ENCODE measurements at regions of chr1 and their contacts with region 1.

Region 1: GRCh38 chr1:25091658-25092057 is 140.6 kb downstream of the SYF2 start:
- DNase-seq: no peak
- H3K4me3 ChIP-seq: no peak overlapping the region
- H3K27ac ChIP-seq: no peak overlapping the region
- H3K4me1 ChIP-seq: no peaks in the 10 kb centered on the region
- H3K27me3 ChIP-seq: no peaks in the 10 kb centered on the region
- CTCF ChIP-seq: no peak

Region 2: GRCh38 chr1:24866211-24867083 is 225.2 kb before region 1 on chr1:
- CTCF ChIA-PET with region 1: interaction called, 15 read pairs
- POLR2A ChIA-PET with region 1: no interaction called
- intact Hi-C with region 1: no loop called
- DNase-seq: no peak
- H3K4me3 ChIP-seq: no peak overlapping the region
- H3K27ac ChIP-seq: no peak overlapping the region
- H3K4me1 ChIP-seq: no peaks in the 10 kb centered on the region
- H3K27me3 ChIP-seq: no peaks in the 10 kb centered on the region
- CTCF ChIP-seq: no peak

Region 3: DNA sequence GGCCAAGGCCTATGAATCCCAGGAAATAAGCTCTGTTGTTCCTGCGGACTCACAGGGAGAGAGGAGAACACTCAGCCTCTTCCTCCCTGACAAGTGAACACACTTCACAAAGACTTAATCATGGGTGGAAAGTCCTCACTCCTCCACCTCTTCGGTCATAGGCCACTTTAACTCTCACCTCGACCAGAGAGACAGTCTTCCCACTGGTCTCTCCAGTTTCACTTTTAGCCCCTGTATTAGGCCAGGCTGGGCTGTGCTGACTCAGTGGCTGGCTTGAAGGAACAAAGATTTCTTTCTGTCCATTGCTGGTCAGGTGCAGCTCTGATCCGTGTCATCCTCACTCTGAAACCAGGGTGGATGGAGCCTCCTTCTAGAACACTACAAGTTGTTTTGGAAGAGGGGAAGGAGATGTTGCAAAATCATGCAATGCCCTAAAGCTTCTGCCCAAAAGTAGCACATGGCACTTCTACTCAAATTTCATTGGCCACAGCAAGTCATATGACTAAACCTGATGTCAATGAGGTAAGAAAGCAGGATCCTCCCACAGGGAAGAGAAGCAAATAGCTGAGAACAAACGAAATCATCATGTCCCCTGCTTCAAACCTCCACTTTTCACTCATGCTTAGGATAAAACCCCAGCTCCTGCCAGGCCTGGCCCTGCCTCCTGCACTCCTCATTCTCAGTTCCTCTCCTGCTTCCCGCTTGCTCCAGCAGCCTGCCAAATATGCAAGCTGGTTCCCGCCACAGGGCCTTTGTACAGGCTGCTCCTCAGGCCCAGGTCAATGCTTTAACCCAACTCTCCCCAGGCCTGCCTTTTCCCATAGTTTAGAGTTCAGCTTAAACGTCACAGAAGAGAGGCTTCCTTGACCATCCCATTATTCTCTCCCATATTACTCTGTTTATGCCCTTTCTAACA is 11.1 kb before region 1 on chr1:
- CTCF ChIA-PET with region 1: no interaction called
- POLR2A ChIA-PET with region 1: interaction called, 11 read pairs
- intact Hi-C with region 1: no loop called
- DNase-seq: peak; percentile 19
- H3K4me3 ChIP-seq: no peak overlapping the region
- H3K27ac ChIP-seq: no peak overlapping the region
- H3K4me1 ChIP-seq: no peaks in the 10 kb centered on the region
- H3K27me3 ChIP-seq: no peaks in the 10 kb centered on the region
- CTCF ChIP-seq: no peak

Region 4: DNA sequence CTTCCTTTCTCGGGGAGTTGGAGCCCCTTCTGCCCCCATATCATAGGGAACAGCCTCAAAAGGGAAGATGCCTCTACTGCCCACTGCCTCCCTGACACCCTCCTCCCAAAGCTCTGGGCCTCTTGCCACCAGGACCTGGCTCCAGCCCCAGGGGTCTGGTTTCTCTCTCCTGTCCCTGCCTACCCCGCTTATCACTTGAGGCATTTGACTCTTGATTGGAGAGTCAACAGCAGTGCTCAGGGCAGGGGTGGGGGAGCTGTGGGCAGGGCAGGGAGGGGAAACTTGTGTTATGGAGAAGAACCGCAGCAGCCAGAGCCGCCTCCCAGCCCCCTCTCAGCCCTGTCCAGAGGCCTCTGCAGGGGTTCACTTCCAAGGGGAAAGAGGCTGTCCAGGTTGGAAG is 975.2 kb after region 1 on chr1:
- CTCF ChIA-PET with region 1: no interaction called
- POLR2A ChIA-PET with region 1: no interaction called
- intact Hi-C with region 1: no loop called
- DNase-seq: no peak
- H3K4me3 ChIP-seq: no peak overlapping the region
- H3K27ac ChIP-seq: no peak overlapping the region
- H3K4me1 ChIP-seq: no peaks in the 10 kb centered on the region
- H3K27me3 ChIP-seq: peaks cover 18% of the 10 kb centered on the region
- CTCF ChIP-seq: no peak

Measured in A673 (cell line).